H1 (cell line): ENCODE measurements at regions of chr5 and their contacts with region 1.

Region 1: GRCh38 chr5:154405078-154405792 is 40.6 kb upstream of the SAP30L start:
- DNase-seq: peak; percentile 60 to 91
- H3K4me3 ChIP-seq: peak overlapping the region in 3 of 4 experiments; percentile 21 to 51 (median 30); a peak in 6 of 8 replicates
- H3K27ac ChIP-seq: no peak overlapping the region
- H3K4me1 ChIP-seq: no peaks in the 10 kb centered on the region
- H3K27me3 ChIP-seq: no peaks in the 10 kb centered on the region; a peak in 1 of 7 replicates
- CTCF ChIP-seq: peak; percentile 86 to 96 (median 93)
- EP300 ChIP-seq: no peak
- POLR2A ChIP-seq: no peak
- RAD21 ChIP-seq: peak; percentile 97 to 100

Region 2: DNA sequence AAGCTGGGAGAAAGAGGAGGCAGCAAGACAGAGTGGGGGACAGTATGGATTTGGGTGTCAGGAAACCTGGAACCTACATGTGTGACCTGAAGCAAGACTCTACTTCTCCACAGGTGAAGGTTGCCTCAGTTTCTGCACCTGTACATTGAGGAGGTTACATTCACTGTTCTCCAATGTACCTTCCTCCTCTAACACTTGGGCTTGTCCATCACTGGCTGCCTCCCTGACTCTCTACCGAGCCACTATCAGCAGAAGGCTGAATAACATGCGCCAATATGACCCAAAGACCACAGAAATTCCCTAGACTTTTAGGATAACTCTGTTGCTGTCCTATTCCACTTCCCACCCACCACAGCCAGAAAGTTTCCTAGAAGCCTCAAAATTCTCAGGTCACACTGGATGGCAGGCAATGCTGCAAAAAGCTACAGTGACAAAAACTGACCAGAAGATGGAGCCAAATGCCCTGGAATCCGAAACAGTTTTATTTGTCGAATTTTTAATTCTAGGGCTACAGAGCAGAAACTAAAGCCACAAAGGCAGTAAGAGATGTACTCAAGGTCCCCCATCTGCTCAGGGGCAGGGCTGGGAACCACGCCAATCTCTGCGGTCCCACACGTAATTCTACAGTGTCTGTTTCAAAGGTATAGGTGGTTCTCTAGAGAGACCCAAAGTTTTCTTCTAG is 431.0 kb before region 1 on chr5:
- CTCF ChIA-PET with region 1: interaction called, 37 read pairs
- POLR2A ChIA-PET with region 1: no interaction called
- DNase-seq: peak in 1 of 2 experiments; percentile 60
- H3K4me3 ChIP-seq: no peak overlapping the region
- H3K27ac ChIP-seq: no peak overlapping the region
- H3K4me1 ChIP-seq: no peaks in the 10 kb centered on the region
- H3K27me3 ChIP-seq: peaks cover 0 to 2% (median 0%) of the 10 kb centered on the region in 4 experiments; a peak in 1 of 7 replicates
- CTCF ChIP-seq: peak in 2 of 3 experiments; percentile 71 to 74; a peak in 3 of 4 replicates
- EP300 ChIP-seq: no peak
- POLR2A ChIP-seq: no peak
- RAD21 ChIP-seq: peak; percentile 93 to 96

Region 3: GRCh38 chr5:154081246-154081645 is 324.0 kb before region 1 on chr5:
- CTCF ChIA-PET with region 1: interaction called, 21 read pairs
- POLR2A ChIA-PET with region 1: no interaction called
- DNase-seq: no peak
- H3K4me3 ChIP-seq: no peak overlapping the region
- H3K27ac ChIP-seq: no peak overlapping the region
- H3K4me1 ChIP-seq: peaks cover 0 to 17% (median 5%) of the 10 kb centered on the region in 4 experiments; a peak in 2 of 7 replicates
- H3K27me3 ChIP-seq: no peaks in the 10 kb centered on the region
- CTCF ChIP-seq: no peak
- EP300 ChIP-seq: no peak
- POLR2A ChIP-seq: no peak
- RAD21 ChIP-seq: no peak

Region 4: GRCh38 chr5:154189819-154190594 is 215.2 kb before region 1 on chr5:
- CTCF ChIA-PET with region 1: interaction called, 48 read pairs
- POLR2A ChIA-PET with region 1: no interaction called
- DNase-seq: peak in 1 of 2 experiments; percentile 84
- H3K4me3 ChIP-seq: peak overlapping the region; percentile 45 to 77 (median 56)
- H3K27ac ChIP-seq: peak overlapping the region; percentile 71; the same call in 1 of the 2 replicates
- H3K4me1 ChIP-seq: peaks cover 6 to 18% (median 10%) of the 10 kb centered on the region in 4 experiments; a peak in 5 of 7 replicates
- H3K27me3 ChIP-seq: peaks cover 12 to 50% (median 39%) of the 10 kb centered on the region in 4 experiments
- CTCF ChIP-seq: peak in 2 of 3 experiments; percentile 16 to 27; a peak in 3 of 4 replicates
- EP300 ChIP-seq: peak in 1 of 2 experiments; percentile 73; a peak in 1 of 3 replicates
- POLR2A ChIP-seq: no peak; a peak in 1 of 3 replicates
- RAD21 ChIP-seq: peak in 1 of 2 experiments; percentile 11; a peak in 1 of 4 replicates

Region 5: GRCh38 chr5:154202379-154203260 is 202.6 kb before region 1 on chr5:
- CTCF ChIA-PET with region 1: interaction called, 57 read pairs
- POLR2A ChIA-PET with region 1: interaction called, 4 read pairs
- DNase-seq: no peak
- H3K4me3 ChIP-seq: no peak overlapping the region
- H3K27ac ChIP-seq: no peak overlapping the region
- H3K4me1 ChIP-seq: peaks cover 0 to 6% (median 2%) of the 10 kb centered on the region in 4 experiments; a peak in 2 of 7 replicates
- H3K27me3 ChIP-seq: no peaks in the 10 kb centered on the region
- CTCF ChIP-seq: no peak
- EP300 ChIP-seq: no peak
- POLR2A ChIP-seq: no peak
- RAD21 ChIP-seq: no peak

Region 6: DNA sequence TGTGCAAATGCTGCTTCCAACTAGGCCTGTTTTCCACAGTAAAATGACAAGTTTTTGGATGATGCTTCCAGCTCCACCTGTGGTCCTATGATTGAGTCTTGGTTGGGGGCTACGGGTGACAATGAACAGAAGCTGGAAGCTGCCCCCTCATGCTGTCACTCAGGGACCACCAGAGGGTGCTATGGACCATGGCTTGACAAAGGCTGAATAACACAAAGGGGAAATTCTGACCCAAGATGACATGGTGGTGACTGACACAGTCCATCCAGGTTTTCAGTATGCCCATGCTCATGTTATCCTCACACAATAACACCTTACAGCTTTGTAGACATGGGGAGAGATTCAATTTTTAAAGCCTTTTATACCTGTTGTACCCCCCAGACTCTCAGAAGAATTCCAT is 16.6 kb after region 1 on chr5:
- CTCF ChIA-PET with region 1: interaction called, 28 read pairs
- POLR2A ChIA-PET with region 1: no interaction called
- DNase-seq: no peak
- H3K4me3 ChIP-seq: no peak overlapping the region
- H3K27ac ChIP-seq: no peak overlapping the region
- H3K4me1 ChIP-seq: peaks cover 0 to 4% (median 0%) of the 10 kb centered on the region in 4 experiments; a peak in 1 of 7 replicates
- H3K27me3 ChIP-seq: no peaks in the 10 kb centered on the region
- CTCF ChIP-seq: peak; percentile 71 to 83 (median 77)
- EP300 ChIP-seq: no peak
- POLR2A ChIP-seq: no peak
- RAD21 ChIP-seq: peak; percentile 87 to 88

Region 7: GRCh38 chr5:154523709-154524108 is 118.5 kb after region 1 on chr5:
- CTCF ChIA-PET with region 1: no interaction called
- POLR2A ChIA-PET with region 1: no interaction called
- DNase-seq: no peak
- H3K4me3 ChIP-seq: no peak overlapping the region
- H3K27ac ChIP-seq: no peak overlapping the region
- H3K4me1 ChIP-seq: peaks cover 0 to 7% (median under 1%) of the 10 kb centered on the region in 4 experiments; a peak in 4 of 7 replicates
- H3K27me3 ChIP-seq: peaks cover 0 to 4% (median 3%) of the 10 kb centered on the region in 4 experiments; a peak in 3 of 7 replicates
- CTCF ChIP-seq: no peak
- EP300 ChIP-seq: no peak
- POLR2A ChIP-seq: no peak
- RAD21 ChIP-seq: no peak

Region 8: GRCh38 chr5:154749491-154749890 is 344.3 kb after region 1 on chr5:
- CTCF ChIA-PET with region 1: no interaction called
- POLR2A ChIA-PET with region 1: no interaction called
- DNase-seq: no peak
- H3K4me3 ChIP-seq: no peak overlapping the region
- H3K27ac ChIP-seq: no peak overlapping the region
- H3K4me1 ChIP-seq: peaks cover 7 to 13% (median 9%) of the 10 kb centered on the region in 4 experiments
- H3K27me3 ChIP-seq: no peaks in the 10 kb centered on the region
- CTCF ChIP-seq: no peak
- EP300 ChIP-seq: no peak
- POLR2A ChIP-seq: no peak
- RAD21 ChIP-seq: no peak

Region 9: DNA sequence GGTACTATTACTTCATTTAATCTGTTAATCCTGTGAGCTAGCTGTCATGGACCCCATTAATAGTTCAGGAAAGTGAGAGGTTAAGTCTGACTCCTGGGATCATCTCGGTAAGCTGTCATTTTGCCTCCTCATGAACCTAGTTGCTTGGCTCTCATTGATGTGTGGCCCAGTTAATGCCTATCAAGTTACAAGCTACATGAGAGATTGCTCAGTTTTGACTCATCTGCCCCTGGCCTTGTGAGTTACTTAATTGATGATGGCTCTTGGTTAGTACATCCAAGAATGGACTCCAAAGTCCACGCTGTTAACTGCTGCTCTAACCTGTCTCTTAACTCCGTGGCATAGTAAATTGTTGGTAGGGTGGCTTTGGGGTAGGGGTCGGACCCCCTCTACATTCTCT is 373.9 kb after region 1 on chr5:
- CTCF ChIA-PET with region 1: no interaction called
- POLR2A ChIA-PET with region 1: no interaction called
- DNase-seq: no peak
- H3K4me3 ChIP-seq: no peak overlapping the region
- H3K27ac ChIP-seq: no peak overlapping the region
- H3K4me1 ChIP-seq: peaks cover 13 to 40% (median 32%) of the 10 kb centered on the region in 4 experiments
- H3K27me3 ChIP-seq: no peaks in the 10 kb centered on the region
- CTCF ChIP-seq: no peak
- EP300 ChIP-seq: no peak
- POLR2A ChIP-seq: no peak
- RAD21 ChIP-seq: no peak